AG04450 (cell line): ENCODE measurements at regions of chr9 and their contacts with region 1.

Region 1: DNA sequence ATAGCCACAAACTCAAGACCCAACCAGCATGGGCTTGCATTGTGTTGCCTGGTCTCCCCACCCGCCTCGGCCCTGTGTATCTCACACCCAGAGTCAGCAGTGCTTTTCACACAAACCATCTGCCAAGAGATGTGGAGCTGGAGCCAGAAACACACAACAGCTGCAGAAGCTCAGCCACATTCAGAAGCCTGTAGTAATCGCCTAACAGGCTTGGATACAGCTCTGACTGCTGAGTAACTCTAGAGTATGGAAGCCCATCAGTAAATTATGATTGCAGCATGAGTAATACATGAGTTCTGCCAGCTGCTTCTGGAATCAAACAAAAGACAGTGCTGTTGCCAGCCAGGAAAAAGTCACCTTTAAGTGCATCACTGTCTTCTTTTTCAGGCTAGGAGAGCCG is 16.0 kb downstream of the TEK start:
- DNase-seq: peak; percentile 98
- H3K4me3 ChIP-seq: no peak overlapping the region
- H3K27ac ChIP-seq: peak overlapping the region; percentile 93
- H3K27me3 ChIP-seq: no peaks in the 10 kb centered on the region
- CTCF ChIP-seq: no peak

Region 2: GRCh38 chr9:27086818-27087680 is 38.0 kb before region 1 on chr9:
- CTCF ChIA-PET with region 1: no interaction called
- POLR2A ChIA-PET with region 1: interaction called, 36 read pairs
- DNase-seq: peak; percentile 70
- H3K4me3 ChIP-seq: no peak overlapping the region; the same call in 1 of the 2 replicates
- H3K27ac ChIP-seq: peak overlapping the region; percentile 91
- H3K27me3 ChIP-seq: no peaks in the 10 kb centered on the region
- CTCF ChIP-seq: no peak

Region 3: GRCh38 chr9:27094640-27095298 is 30.3 kb before region 1 on chr9:
- CTCF ChIA-PET with region 1: no interaction called
- POLR2A ChIA-PET with region 1: interaction called, 10 read pairs
- DNase-seq: no peak
- H3K4me3 ChIP-seq: no peak overlapping the region
- H3K27ac ChIP-seq: peak overlapping the region; percentile 34
- H3K27me3 ChIP-seq: no peaks in the 10 kb centered on the region
- CTCF ChIP-seq: no peak

Region 4: DNA sequence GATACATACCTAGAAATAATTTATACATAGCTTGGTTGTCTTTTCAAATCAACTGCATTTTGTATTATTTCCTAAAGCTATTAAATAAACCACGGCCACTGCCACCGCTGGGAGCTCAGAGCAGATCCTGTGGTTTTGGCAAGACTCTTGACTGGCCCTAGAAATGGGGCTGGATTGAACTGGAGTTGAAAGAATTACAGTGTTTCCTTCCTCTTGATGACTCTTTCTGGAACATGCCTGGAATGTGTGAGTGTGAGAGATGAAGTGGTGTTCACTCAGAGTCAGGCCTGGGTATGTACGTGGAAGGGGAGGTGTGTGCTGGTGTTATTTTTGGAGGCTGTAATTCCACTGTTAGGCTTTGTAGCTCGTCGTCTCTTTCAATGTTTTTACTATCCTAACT is 29.9 kb after region 1 on chr9:
- CTCF ChIA-PET with region 1: no interaction called
- POLR2A ChIA-PET with region 1: interaction called, 10 read pairs
- DNase-seq: peak; percentile 71
- H3K4me3 ChIP-seq: no peak overlapping the region
- H3K27ac ChIP-seq: peak overlapping the region; percentile 34
- H3K27me3 ChIP-seq: no peaks in the 10 kb centered on the region
- CTCF ChIP-seq: no peak